GM10248 (cell line): ENCODE measurements at regions of chr11 and their contacts with region 1.

Region 1: GRCh38 chr11:46529095-46529905 is 64.5 kb downstream of the AMBRA1 start:
- DNase-seq: peak; percentile 88
- CTCF ChIP-seq: peak; percentile 78

Region 2: DNA sequence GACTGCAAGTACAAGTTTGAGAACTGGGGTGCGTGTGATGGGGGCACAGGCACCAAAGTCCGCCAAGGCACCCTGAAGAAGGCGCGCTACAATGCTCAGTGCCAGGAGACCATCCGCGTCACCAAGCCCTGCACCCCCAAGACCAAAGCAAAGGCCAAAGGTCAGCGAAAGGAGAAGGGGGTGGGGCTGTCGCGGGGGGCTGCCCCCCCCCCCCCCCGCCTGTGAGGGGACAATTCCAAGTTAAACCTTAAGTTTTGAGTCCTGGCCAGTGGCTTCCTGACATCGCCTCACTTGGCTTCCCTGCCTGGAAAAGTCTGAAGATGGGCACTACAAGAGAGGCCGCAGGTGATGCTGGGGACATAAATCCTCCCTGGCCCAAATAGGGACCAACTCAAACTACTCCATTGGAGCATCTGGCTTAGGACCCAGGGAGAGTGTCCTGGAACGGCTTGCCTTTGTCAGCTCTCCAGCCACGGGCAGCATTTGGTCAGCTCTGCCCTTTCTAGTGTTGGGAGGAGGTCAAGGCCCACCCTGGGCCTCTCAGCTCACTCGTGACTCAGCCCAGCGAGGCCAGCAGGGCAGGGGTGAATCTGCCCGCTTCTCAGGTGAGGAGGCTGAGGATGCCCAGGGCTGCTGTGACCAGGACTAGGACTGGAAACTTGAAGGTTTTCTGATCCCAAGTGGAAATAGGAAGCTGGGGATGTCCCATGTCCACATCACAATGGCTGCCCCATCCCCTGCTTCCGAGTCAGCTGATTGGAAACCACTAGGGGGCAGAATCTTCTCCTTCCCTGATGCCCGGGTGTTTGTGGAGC is 146.5 kb before region 1 on chr11:
- CTCF ChIA-PET with region 1: interaction called, 83 read pairs
- POLR2A ChIA-PET with region 1: no interaction called
- DNase-seq: no peak
- CTCF ChIP-seq: no peak

Region 3: GRCh38 chr11:46404476-46405017 is 124.8 kb before region 1 on chr11:
- CTCF ChIA-PET with region 1: interaction called, 11 read pairs
- POLR2A ChIA-PET with region 1: no interaction called
- DNase-seq: no peak
- CTCF ChIP-seq: no peak

Region 4: DNA sequence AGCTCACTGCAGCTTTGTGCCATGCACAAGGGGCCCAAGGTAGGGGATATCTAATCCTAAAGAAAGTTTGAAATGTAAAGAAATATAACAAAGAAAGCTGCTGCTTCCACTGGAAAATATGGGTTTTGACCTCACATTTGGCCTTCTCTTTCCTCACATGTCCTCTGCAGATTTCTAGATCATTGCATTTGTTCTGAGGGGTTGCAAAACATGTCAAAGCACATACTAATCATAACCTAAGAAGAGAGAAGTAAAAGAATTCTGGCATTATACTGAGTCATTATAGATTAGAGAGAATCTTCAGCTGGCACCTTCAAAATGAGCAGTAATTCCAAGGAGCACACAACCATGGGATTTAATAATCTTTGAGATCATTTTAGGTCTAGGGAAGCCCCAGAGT is 45.2 kb before region 1 on chr11:
- CTCF ChIA-PET with region 1: interaction called, 27 read pairs
- POLR2A ChIA-PET with region 1: no interaction called
- DNase-seq: no peak
- CTCF ChIP-seq: no peak

Region 5: DNA sequence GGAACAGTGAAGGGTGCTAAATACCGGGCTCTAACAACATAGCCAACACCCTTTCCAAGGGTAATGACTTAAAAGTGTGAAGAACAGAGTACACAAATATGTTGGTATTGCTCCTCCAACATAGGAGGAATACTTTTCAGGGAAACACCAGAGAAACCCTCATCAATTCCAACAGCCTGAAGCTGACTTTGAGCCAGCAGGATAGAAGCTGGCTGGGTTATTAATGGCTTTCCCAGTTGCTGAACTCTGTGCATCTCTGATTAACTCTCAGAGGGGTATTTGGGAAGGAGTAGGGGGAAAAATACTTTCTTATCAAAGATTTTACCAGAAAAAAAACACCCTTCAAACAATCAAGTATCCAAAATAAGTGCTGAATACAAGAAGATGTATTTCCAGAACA is 31.1 kb before region 1 on chr11:
- CTCF ChIA-PET with region 1: interaction called, 19 read pairs
- POLR2A ChIA-PET with region 1: no interaction called
- DNase-seq: no peak
- CTCF ChIP-seq: no peak

Region 6: GRCh38 chr11:46547579-46547978 is 18.3 kb after region 1 on chr11:
- CTCF ChIA-PET with region 1: interaction called, 18 read pairs
- POLR2A ChIA-PET with region 1: no interaction called
- DNase-seq: no peak
- CTCF ChIP-seq: no peak